ENCODE measurements at regions of chr2 and their contacts with region 1.

Region 1: DNA sequence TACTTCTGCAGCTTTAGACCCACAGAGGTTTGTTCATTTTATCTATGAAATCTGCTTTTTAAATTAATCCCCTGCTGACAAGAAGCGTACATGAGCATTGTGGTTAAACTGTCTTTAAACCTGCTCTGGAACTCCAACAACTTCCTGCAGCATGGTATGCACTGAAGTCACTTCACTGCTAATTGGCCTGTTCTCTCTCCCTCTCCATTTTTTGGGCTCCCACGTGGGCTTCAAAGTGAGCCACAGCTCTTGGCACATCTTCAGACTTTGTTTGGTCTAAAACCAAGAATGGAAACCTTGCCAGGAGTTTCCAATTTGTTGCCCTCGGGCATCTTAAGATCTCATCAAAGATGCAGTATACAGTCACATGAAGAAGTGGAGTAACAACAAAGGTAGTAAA is 311.4 kb downstream of the LRRTM1 start:
- DNase-seq: no peak
- H3K4me3 ChIP-seq: no peak overlapping the region
- H3K27ac ChIP-seq: no peak overlapping the region
- H3K27me3 ChIP-seq: no peaks in the 10 kb centered on the region
- CTCF ChIP-seq: no peak

Region 2: DNA sequence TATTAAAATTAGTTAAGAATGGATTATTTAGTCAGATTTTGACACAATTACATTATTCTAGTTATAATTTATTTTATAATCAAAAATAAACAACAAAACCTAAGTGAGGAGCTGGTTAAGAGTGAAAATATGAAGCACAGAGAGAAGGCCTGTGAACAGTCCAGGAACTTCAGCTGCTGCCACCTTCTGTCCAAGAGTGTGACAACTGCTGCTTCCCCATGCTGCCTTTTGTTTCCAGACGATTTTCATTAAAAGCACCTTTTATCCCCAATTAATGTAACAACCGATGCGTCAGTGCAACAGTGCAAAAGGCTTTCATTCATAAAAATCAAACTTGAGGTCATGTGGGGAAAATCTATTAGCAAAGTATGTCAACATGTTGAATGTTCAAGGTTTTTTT is 116.7 kb before region 1 on chr2:
- intact Hi-C with region 1: no loop called
- DNase-seq: peak in 2 of 10 donors; percentile 7 to 34
- H3K4me3 ChIP-seq: no peak overlapping the region
- H3K27ac ChIP-seq: no peak overlapping the region
- H3K27me3 ChIP-seq: no peaks in the 10 kb centered on the region
- CTCF ChIP-seq: peak in 52 of 56 donors; percentile 23 to 65 (median 46)

Region 3: GRCh38 chr2:79935771-79936657 is 57.1 kb before region 1 on chr2:
- intact Hi-C with region 1: no loop called
- DNase-seq: peak; percentile 38 to 87 (median 68)
- H3K4me3 ChIP-seq: peak overlapping the region in 57 of 59 donors; percentile 1 to 64 (median 38)
- H3K27ac ChIP-seq: peak overlapping the region in 51 of 59 donors; percentile 5 to 86 (median 70)
- H3K27me3 ChIP-seq: no peaks in the 10 kb centered on the region
- CTCF ChIP-seq: peak; percentile 40 to 83 (median 71)

Region 4: DNA sequence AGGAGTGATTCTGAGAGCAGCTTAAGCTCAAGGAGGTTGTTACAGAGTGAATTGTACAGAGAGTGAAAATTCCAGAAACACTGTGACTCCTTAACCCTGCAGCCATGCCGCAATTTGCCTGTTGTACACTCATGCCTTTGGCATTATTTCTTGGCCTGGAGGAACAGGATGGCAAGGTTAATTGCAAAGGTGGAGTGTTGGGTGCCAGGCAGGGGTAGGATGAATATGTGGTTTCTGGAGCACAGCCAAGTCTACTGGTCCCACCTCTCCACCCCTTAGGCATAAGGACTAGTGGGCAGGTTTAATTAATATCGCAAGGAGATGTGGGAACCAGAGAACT is 61.2 kb after region 1 on chr2:
- intact Hi-C with region 1: loop called in 1 of 2 experiments (anchors 10 kb)
- DNase-seq: no peak
- H3K4me3 ChIP-seq: no peak overlapping the region
- H3K27ac ChIP-seq: no peak overlapping the region
- H3K27me3 ChIP-seq: no peaks in the 10 kb centered on the region
- CTCF ChIP-seq: no peak